ENCODE measurements at regions of chr2 and their contacts with region 1.

Region 1: GRCh38 chr2:241734467-241735208 is at the start of gene D2HGDH:
- DNase-seq: peak; percentile 97
- ATAC-seq: peak; percentile 94
- H3K4me3 Mint-ChIP-seq: peak within 1 kb of the TSS; percentile 82
- H3K27ac Mint-ChIP-seq: peak within 1 kb of the TSS; percentile 75
- H3K4me1 Mint-ChIP-seq: peaks cover 57% of the 10 kb centered on the region
- H3K27me3 Mint-ChIP-seq: no peaks in the 10 kb centered on the region
- CTCF ChIP-seq: no peak
- total RNA-seq, gene D2HGDH: 37.7 and 55.4 TPM in 2 replicates

Region 2: GRCh38 chr2:241637000-241637791 is 97.4 kb before region 1 on chr2 and contains the starts of genes ATG4B and THAP4:
- CTCF ChIA-PET with region 1: no interaction called
- POLR2A ChIA-PET with region 1: interaction called, 3 read pairs
- intact Hi-C with region 1: loop called (anchors 1 kb)
- DNase-seq: peak; percentile 84
- ATAC-seq: peak; percentile 72
- H3K4me3 Mint-ChIP-seq: peak within 1 kb of the TSS; percentile 91
- H3K27ac Mint-ChIP-seq: peak within 1 kb of the TSS; percentile 83
- H3K4me1 Mint-ChIP-seq: peaks cover 45% of the 10 kb centered on the region
- H3K27me3 Mint-ChIP-seq: no peaks in the 10 kb centered on the region
- CTCF ChIP-seq: no peak
- total RNA-seq, gene ATG4B: 92.6 and 101 TPM in 2 replicates
- total RNA-seq, gene THAP4: 23.7 and 26.7 TPM in 2 replicates

Region 3: DNA sequence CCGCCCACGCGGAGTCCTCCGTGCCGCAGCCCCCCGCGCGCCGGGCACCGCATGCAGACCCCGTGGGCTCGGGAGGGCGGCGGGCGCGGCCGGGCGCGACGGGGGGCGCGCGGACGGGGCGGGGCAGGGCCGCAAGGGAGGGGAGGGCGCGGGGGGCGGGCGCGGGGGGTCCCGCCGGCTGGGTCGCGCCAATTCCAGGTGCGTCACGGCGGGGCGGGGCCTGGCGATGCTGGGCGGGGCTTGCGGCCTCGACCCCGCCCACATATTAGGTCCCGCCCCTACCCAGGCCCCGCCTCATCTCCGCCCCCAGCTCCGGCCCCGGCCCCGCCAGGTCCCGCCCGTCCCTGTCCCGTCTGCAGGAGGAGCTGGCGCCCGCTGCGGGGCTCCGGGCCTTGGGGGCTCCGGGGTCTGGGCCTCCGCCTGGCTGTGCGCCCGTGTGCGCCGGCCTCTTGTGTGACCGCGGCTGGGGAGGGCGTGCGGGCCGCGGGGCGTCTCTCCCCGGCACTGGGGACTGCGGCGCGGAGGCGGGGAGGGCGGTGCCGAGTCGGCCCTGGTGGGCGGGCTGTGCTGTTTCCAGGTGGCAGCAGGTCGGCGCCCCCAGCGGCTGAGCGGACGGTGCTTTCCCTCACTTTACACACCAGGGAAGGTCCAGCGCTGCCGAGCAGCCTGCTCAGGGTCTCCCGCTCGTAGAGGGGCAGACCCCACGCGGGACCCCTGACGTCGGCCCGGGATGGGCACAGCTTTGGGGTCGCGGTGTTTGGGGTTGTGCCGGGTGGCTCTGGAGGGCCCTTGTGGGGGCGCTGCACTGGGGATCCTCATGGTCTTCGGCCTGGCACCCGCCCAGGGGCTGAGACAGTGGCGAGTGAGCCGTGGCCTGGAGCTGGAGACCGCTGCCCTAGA is 32.3 kb before region 1 on chr2:
- CTCF ChIA-PET with region 1: interaction called, 13 read pairs
- POLR2A ChIA-PET with region 1: interaction called, 81 read pairs
- intact Hi-C with region 1: loop called (anchors 1 kb)
- DNase-seq: peak; percentile 93
- ATAC-seq: peak; percentile 73
- H3K4me3 Mint-ChIP-seq: peak overlapping the region; percentile 82
- H3K27ac Mint-ChIP-seq: peak overlapping the region; percentile 79
- H3K4me1 Mint-ChIP-seq: peaks cover 26% of the 10 kb centered on the region
- H3K27me3 Mint-ChIP-seq: no peaks in the 10 kb centered on the region
- CTCF ChIP-seq: no peak

Region 4: DNA sequence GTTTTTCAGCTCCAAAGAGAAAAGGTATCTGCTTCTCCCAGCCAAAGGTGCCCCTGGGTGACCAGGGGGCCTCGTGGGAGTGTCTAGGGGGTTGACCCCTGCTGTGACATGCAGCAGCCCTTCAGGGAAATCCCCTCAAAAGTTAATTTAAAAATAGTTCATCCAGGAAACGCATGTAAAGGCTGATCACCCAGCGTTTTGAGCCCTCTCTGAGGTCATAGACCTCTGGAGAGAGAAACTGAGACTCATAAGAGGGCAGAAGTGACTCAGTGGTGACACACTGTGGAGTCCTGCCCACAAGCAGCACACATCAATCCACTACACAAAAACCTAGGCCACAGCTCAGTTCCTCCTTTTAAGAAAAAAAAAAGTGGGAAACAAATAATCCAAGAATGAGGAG is 53.9 kb after region 1 on chr2:
- CTCF ChIA-PET with region 1: interaction called, 3 read pairs
- POLR2A ChIA-PET with region 1: interaction called, 25 read pairs
- intact Hi-C with region 1: loop called (anchors 1 kb)
- DNase-seq: peak; percentile 23
- ATAC-seq: peak; percentile 87
- H3K4me3 Mint-ChIP-seq: peak overlapping the region; percentile 45
- H3K27ac Mint-ChIP-seq: peak overlapping the region; percentile 79
- H3K4me1 Mint-ChIP-seq: peaks cover 35% of the 10 kb centered on the region
- H3K27me3 Mint-ChIP-seq: no peaks in the 10 kb centered on the region
- CTCF ChIP-seq: no peak

Region 5: GRCh38 chr2:241859436-241860183 is 125.0 kb after region 1 on chr2:
- CTCF ChIA-PET with region 1: no interaction called
- POLR2A ChIA-PET with region 1: interaction called, 12 read pairs
- intact Hi-C with region 1: no loop called
- DNase-seq: peak; percentile 55
- ATAC-seq: peak; percentile 62
- H3K4me3 Mint-ChIP-seq: peak overlapping the region; percentile 79
- H3K27ac Mint-ChIP-seq: peak overlapping the region; percentile 91
- H3K4me1 Mint-ChIP-seq: peaks cover 41% of the 10 kb centered on the region
- H3K27me3 Mint-ChIP-seq: peaks cover 26% of the 10 kb centered on the region
- CTCF ChIP-seq: no peak